ENCODE measurements at regions of chr12 and their contacts with region 1.

Region 1: GRCh38 chr12:48851883-48852733 is at the start of gene DDX23:
- DNase-seq: peak; percentile 97
- H3K4me3 Mint-ChIP-seq: peak within 1 kb of the TSS; percentile 94
- H3K27ac Mint-ChIP-seq: peak within 1 kb of the TSS; percentile 98
- H3K4me1 Mint-ChIP-seq: peaks cover 28% of the 10 kb centered on the region
- H3K27me3 Mint-ChIP-seq: no peaks in the 10 kb centered on the region
- total RNA-seq, gene DDX23: 115 to 125 TPM

Region 2: DNA sequence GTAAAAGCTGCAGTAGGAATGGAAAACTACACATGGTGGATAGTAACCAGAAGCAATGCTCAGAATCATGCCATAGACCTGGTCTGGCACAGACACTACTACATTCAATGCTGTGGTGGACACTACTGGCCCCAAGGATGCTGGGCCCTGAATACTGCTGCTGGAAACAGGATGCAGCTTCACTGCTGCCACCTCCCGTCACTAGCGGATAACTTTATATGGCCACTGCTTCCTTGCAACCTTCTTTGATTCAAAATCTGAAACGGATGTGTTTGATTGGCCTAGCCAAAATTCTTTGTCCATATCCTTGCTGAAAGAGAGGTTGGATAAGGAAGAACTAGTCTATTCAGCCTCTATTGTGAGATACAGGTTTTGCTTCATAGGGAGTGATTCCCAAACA is 93.9 kb before region 1 on chr12:
- CTCF ChIA-PET with region 1: interaction called, 13 read pairs
- intact Hi-C with region 1: loop called (anchors 1 kb)
- DNase-seq: no peak
- H3K4me3 Mint-ChIP-seq: no peak overlapping the region
- H3K27ac Mint-ChIP-seq: no peak overlapping the region
- H3K4me1 Mint-ChIP-seq: peaks cover 2% of the 10 kb centered on the region
- H3K27me3 Mint-ChIP-seq: no peaks in the 10 kb centered on the region

Region 3: DNA sequence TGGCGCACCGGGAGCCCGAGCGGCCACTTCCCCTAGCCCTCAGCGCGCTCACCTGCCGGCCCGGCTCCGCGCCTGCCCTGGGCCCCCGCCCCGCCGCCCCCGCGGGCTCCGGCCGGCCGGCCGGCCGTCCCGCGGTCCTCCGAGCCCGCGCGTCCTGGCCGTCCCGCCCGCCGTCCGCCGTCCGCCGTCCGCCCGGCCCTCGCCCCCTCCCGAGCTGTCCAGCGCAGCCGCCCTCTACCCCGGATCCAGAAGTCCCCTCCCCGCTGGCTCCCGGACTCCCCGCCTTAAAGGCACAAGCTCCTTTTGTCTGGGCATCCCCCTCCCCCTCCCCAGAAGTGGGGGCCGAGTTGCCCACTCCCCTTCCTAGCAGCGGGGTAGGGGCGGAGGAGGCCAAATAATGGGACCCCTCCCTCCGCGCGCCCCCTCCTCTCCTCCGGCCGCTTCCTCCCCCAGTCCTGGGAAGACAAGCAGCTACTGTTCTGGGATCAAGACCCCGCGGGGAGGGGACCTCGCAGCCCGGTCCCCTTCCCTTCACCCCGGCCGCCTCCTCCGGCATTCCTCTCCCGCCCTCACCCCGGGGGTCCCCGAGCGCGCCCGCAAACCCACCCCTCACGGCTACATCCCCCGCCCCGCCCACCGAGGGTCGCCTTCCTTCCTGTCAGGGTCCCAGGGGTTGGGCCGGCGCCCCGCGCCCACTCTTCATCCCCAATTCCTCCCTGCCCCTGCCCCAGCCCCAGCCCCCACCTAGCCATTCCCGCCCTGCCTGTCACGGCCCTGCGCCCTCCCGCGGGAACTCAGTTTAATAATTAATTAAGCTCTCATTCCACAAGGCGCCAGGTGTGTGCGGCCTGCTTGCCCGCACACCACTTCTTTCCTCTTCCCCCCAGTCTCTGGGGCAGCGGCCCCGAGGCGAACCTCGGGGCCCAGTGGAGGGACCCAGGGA is 63.0 kb before region 1 on chr12 and contains the start of gene ADCY6:
- CTCF ChIA-PET with region 1: no interaction called
- intact Hi-C with region 1: no loop called
- DNase-seq: no peak
- H3K4me3 Mint-ChIP-seq: peak within 1 kb of the TSS; percentile 64
- H3K27ac Mint-ChIP-seq: no peak within 1 kb of the TSS
- H3K4me1 Mint-ChIP-seq: peaks cover 4% of the 10 kb centered on the region
- H3K27me3 Mint-ChIP-seq: peaks cover 40% of the 10 kb centered on the region
- total RNA-seq, gene ADCY6: 0.05 to 0.15 TPM

Region 4: GRCh38 chr12:48890657-48891418 is 38.7 kb after region 1 on chr12:
- CTCF ChIA-PET with region 1: interaction called, 275 read pairs
- intact Hi-C with region 1: loop called (anchors 1 kb)
- DNase-seq: peak; percentile 86
- H3K4me3 Mint-ChIP-seq: peak overlapping the region; percentile 24
- H3K27ac Mint-ChIP-seq: no peak overlapping the region
- H3K4me1 Mint-ChIP-seq: peaks cover 5% of the 10 kb centered on the region
- H3K27me3 Mint-ChIP-seq: peaks cover 13% of the 10 kb centered on the region

Region 5: DNA sequence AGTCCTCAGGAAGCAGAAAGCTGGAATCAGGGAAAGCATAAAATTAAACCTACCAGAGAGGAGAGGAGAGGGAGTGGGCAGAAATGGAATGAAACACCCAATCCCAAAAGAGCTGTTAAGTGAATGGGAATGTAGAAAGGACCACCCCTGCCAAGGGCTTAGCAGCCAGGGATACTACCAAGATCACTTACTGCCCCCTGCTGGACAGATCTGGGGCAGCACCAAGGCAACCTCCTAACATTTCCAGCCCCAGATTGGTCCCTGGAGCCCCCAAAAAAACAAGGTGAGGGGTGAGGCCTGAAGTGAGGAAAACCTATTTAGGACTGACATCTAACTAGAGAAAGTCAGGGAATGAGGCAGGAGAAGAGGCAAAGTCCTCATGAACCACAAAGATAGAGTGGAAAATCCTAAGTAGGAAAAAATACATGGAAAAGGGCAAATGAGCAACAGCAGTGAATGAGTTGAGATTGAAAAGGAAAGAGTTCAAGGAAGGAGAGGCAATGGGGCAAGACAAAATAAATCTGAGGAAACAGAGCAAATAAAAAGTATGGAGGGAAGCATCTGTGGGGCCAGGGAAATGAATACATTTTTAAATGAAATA is 84.4 kb after region 1 on chr12:
- CTCF ChIA-PET with region 1: interaction called, 22 read pairs
- intact Hi-C with region 1: loop called (anchors 1 kb)
- DNase-seq: peak; percentile 90
- H3K4me3 Mint-ChIP-seq: no peak overlapping the region
- H3K27ac Mint-ChIP-seq: peak overlapping the region; percentile 47
- H3K4me1 Mint-ChIP-seq: peaks cover 10% of the 10 kb centered on the region
- H3K27me3 Mint-ChIP-seq: no peaks in the 10 kb centered on the region

Region 6: DNA sequence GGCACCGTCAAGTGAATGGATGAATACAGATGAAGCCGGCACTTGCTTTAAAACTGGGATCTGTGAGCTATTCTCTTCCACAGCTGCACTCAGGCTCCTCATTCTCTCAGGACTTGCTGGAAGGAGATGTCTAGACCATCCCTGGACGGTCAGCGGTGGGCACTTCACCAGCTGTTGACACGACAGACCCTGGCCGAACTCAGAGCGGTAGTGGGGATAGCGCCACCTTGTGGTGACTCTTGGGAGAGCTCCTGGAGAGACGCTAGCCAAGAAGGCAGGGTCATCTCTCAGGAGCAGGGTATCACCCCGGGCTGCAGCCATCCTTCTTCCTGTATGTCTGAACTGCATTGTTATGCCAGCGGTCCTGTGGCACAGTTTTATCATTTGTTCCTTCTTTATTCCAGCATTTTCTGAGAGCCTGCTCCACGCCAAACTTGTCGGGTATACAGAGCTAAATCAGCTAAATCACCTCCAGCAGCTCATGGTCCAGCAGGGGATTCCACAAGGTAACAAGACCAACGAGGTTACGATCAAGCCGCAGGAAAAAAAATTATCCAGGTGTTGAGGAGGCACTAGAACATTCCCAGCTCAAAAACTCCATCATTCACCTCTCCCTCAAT is 136.0 kb after region 1 on chr12:
- CTCF ChIA-PET with region 1: interaction called, 26 read pairs
- intact Hi-C with region 1: loop called (anchors 2 kb)
- DNase-seq: peak; percentile 84
- H3K4me3 Mint-ChIP-seq: no peak overlapping the region
- H3K27ac Mint-ChIP-seq: no peak overlapping the region
- H3K4me1 Mint-ChIP-seq: no peaks in the 10 kb centered on the region
- H3K27me3 Mint-ChIP-seq: peaks cover 22% of the 10 kb centered on the region

Region 7: GRCh38 chr12:49069507-49070346 is 217.6 kb after region 1 on chr12 and contains the start of gene RHEBL1:
- CTCF ChIA-PET with region 1: interaction called, 3 read pairs
- intact Hi-C with region 1: loop called (anchors 1 kb)
- DNase-seq: peak; percentile 100
- H3K4me3 Mint-ChIP-seq: peak within 1 kb of the TSS; percentile 99
- H3K27ac Mint-ChIP-seq: peak within 1 kb of the TSS; percentile 76
- H3K4me1 Mint-ChIP-seq: peaks cover 12% of the 10 kb centered on the region
- H3K27me3 Mint-ChIP-seq: no peaks in the 10 kb centered on the region
- total RNA-seq, gene RHEBL1: 11.8 to 15.2 TPM